Panc1 (cell line): ENCODE measurements at regions of chr15 and their contacts with region 1.

Region 1: DNA sequence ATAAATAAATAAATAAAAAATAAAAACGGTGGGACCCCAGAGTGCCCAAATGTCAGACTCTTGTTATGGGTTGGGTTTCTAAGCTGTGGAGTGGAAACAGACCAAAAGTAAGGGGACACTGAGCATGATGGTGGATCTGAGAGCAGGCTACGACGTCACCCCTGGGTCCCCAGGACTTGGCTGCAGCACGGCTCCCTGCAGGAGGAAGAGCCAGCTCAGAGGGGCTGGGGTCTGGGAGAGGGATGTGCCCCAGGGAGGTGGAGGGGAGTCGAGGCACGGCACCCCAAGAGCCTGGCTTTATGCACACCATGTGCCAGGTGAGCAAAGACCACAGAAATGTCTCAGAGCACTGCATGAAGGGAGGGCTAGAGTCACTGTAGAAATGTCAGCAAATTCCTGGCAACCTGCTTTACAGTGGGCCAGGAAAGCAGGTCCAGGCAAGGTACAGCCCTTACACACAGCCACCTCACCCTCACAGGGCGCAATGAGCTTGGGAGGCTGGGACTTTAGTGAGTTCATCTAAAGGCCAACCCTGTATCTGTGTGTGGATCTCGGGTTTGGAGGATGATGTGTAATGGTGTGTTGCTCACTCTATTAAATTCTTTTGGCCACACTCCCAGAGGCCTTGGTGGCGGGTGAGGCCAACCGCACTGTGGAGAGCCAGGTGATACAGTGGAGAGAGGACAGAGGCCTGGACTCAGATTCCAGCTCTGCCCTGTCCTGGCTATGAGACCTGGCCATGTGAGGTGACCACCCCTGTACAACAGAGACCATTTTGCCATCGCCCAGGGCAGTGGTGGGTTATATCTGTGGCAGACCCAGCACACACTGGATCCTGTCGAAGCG is 14.1 kb downstream of the CTSH start:
- DNase-seq: peak; percentile 85
- ATAC-seq: peak; percentile 87
- H3K4me3 ChIP-seq: no peak overlapping the region
- H3K27ac ChIP-seq: peak overlapping the region; percentile 97
- H3K4me1 ChIP-seq: peaks cover 81% of the 10 kb centered on the region
- H3K27me3 ChIP-seq: no peaks in the 10 kb centered on the region
- CTCF ChIP-seq: no peak

Region 2: GRCh38 chr15:78949461-78949860 is 18.7 kb after region 1 on chr15:
- CTCF ChIA-PET with region 1: no interaction called
- POLR2A ChIA-PET with region 1: no interaction called
- in situ Hi-C with region 1: no loop called
- intact Hi-C with region 1: no loop called
- DNase-seq: no peak
- ATAC-seq: no peak
- H3K4me3 ChIP-seq: no peak overlapping the region
- H3K27ac ChIP-seq: peak overlapping the region; percentile 84; the same call in 1 of the 2 replicates
- H3K4me1 ChIP-seq: peaks cover 43% of the 10 kb centered on the region
- H3K27me3 ChIP-seq: no peaks in the 10 kb centered on the region
- CTCF ChIP-seq: no peak

Region 3: DNA sequence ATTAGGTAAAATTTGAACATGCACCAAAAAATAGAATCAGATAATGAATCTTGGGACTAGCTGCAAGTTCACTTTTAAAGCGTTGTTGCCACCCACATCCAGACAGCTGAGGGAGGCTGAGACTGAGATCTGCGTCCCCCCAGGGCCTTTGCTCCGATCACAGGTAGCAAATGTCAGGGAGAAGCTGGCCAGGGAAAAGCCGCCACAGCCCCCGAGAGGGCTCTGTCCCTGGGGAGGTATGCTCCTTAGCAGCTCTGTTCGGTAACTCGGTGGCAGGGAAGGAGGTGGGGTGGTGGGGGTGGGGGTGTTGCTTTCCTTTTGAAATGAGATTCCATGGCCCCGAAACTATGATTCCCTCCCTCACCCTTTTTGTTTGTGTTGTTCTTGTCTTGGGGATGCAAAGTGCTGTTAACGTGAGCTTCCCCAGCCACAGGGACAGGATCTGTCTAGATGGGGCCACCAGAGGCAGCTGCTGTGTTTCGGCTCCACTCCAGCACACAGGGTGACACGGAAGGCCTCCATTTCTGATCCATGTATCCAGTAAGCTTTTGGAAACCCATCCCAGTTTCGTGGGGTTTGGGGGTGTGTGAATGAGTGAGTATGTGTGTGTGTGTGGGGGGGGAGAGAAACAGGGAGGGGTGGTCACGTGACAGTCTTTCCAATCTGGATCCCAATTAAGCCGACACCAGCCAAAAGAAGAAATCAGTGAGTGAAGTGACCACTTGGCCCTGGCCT is 500.3 kb after region 1 on chr15:
- CTCF ChIA-PET with region 1: no interaction called
- POLR2A ChIA-PET with region 1: interaction called, 10 read pairs
- in situ Hi-C with region 1: no loop called
- intact Hi-C with region 1: no loop called
- DNase-seq: no peak
- ATAC-seq: peak; percentile 22
- H3K4me3 ChIP-seq: peak overlapping the region; percentile 29 to 44
- H3K27ac ChIP-seq: no peak overlapping the region
- H3K4me1 ChIP-seq: no peaks in the 10 kb centered on the region; the same call in 1 of the 2 replicates
- H3K27me3 ChIP-seq: peaks cover 44% of the 10 kb centered on the region
- CTCF ChIP-seq: no peak